ENCODE measurements at regions of chr10 and their contacts with region 1.

Region 1: GRCh38 chr10:93471110-93471651 is 11.0 kb downstream of the MYOF start:
- DNase-seq: peak in 1 of 2 experiments; percentile 81
- H3K4me3 ChIP-seq: 0 out of 2 replicates have a peak overlapping the region, but pooled peaks have one; percentile 8
- H3K27ac ChIP-seq: peak overlapping the region; percentile 97
- H3K4me1 ChIP-seq: peaks cover 70% of the 10 kb centered on the region
- H3K27me3 ChIP-seq: no peaks in the 10 kb centered on the region
- CTCF ChIP-seq: no peak

Region 2: GRCh38 chr10:93458821-93459257 is 12.3 kb before region 1 on chr10:
- CTCF ChIA-PET with region 1: interaction called, 4 read pairs
- POLR2A ChIA-PET with region 1: interaction called, 16 read pairs
- intact Hi-C with region 1: loop called (anchors 1 kb)
- DNase-seq: peak; percentile 86 to 91
- H3K4me3 ChIP-seq: no peak overlapping the region
- H3K27ac ChIP-seq: peak overlapping the region; percentile 90
- H3K4me1 ChIP-seq: peaks cover 14% of the 10 kb centered on the region
- H3K27me3 ChIP-seq: no peaks in the 10 kb centered on the region
- CTCF ChIP-seq: no peak

Region 3: GRCh38 chr10:93630625-93631557 is 159.7 kb after region 1 on chr10:
- CTCF ChIA-PET with region 1: no interaction called
- POLR2A ChIA-PET with region 1: no interaction called
- intact Hi-C with region 1: no loop called
- DNase-seq: no peak
- H3K4me3 ChIP-seq: no peak overlapping the region
- H3K27ac ChIP-seq: no peak overlapping the region
- H3K4me1 ChIP-seq: no peaks in the 10 kb centered on the region
- H3K27me3 ChIP-seq: no peaks in the 10 kb centered on the region
- CTCF ChIP-seq: no peak

Measured in PC-9 (cell line).